Psoas muscle (tissue), 8 donors: ENCODE measurements at regions of chr22 and their contacts with region 1.

Region 1: DNA sequence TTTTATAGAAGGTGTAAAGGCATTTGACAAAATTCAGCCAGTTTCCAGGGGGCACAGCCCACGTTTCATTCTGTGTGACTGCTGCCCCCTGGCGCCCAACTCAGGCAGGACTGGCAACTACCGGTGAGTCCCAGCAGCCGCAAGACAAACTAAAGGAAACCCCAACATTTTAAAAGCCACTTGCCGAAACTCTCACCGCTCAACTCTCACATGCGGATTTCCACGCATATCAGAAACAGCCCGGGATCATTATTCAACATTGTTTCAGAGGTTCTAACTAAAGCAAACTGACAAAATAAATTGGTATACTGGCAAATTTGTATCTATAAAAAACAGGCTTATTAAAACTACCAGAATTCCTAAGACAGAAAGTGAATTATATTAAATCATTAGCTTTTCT is 48.2 kb downstream of the MORC2 start:
- DNase-seq: peak; percentile 83 to 87
- ATAC-seq: peak; percentile 67 to 82 (median 68)
- H3K4me3 ChIP-seq: peak overlapping the region; percentile 68
- H3K27ac ChIP-seq: no peak overlapping the region
- H3K4me1 ChIP-seq: peaks cover 4% of the 10 kb centered on the region
- H3K27me3 ChIP-seq: no peaks in the 10 kb centered on the region
- CTCF ChIP-seq: peak; percentile 94

Region 2: DNA sequence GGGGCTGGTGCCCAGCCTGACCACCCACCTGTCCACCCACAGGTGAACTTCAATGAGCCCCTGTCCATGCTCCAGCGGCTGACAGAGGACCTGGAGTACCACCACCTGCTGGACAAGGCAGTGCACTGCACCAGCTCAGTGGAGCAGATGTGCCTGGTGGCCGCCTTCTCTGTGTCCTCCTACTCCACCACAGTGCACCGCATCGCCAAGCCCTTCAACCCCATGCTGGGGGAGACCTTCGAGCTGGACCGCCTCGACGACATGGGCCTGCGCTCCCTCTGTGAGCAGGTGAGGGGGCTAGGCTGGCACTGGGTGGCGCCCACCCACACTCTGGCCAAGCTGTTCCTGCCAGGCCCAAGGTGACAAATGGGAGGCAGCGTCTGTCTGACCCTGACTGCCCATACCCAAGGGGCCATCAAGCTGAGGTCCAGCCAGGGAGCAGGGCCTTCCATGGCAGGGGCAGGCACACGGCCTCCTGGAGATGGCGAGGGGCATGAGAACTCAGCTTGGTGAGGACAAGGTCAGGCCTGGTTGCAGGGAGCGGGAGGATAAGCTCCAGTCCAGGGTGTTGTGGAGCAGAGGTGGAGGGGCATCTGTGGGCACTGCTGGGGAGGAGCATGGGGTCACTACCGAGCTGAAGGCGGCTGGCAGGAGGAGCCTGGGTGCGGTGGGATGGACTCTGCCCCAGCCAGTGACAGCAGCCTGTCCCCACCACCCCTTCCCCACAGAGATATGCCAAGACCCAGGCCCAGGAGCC is 29.5 kb before region 1 on chr22:
- intact Hi-C with region 1: loop called in 1 of 2 experiments (anchors 1 kb)
- DNase-seq: peak in 1 of 2 donors; percentile 71
- ATAC-seq: peak; percentile 63 to 85 (median 72)
- H3K4me3 ChIP-seq: no peak overlapping the region
- H3K27ac ChIP-seq: no peak overlapping the region
- H3K4me1 ChIP-seq: no peaks in the 10 kb centered on the region
- H3K27me3 ChIP-seq: no peaks in the 10 kb centered on the region
- CTCF ChIP-seq: peak; percentile 76